Left colon (tissue), 2 donors: ENCODE measurements at regions of chr4 and their contacts with region 1.

Region 1: GRCh38 chr4:1746265-1746691 is 25.0 kb downstream of the TACC3 start:
- DNase-seq: peak; percentile 54 to 81
- ATAC-seq: peak; percentile 67

Region 2: GRCh38 chr4:1809754-1810511 is 63.7 kb after region 1 on chr4:
- intact Hi-C with region 1: loop called (anchors 5 kb)
- DNase-seq: peak; percentile 51 to 78
- ATAC-seq: peak; percentile 78

Region 3: GRCh38 chr4:2024683-2025082 is 278.4 kb after region 1 on chr4:
- intact Hi-C with region 1: no loop called
- DNase-seq: no peak
- ATAC-seq: no peak